Naive thymus-derived CD4-positive, alpha-beta T cell (primary cell): ENCODE measurements at regions of chrX and their contacts with region 1.

Region 1: DNA sequence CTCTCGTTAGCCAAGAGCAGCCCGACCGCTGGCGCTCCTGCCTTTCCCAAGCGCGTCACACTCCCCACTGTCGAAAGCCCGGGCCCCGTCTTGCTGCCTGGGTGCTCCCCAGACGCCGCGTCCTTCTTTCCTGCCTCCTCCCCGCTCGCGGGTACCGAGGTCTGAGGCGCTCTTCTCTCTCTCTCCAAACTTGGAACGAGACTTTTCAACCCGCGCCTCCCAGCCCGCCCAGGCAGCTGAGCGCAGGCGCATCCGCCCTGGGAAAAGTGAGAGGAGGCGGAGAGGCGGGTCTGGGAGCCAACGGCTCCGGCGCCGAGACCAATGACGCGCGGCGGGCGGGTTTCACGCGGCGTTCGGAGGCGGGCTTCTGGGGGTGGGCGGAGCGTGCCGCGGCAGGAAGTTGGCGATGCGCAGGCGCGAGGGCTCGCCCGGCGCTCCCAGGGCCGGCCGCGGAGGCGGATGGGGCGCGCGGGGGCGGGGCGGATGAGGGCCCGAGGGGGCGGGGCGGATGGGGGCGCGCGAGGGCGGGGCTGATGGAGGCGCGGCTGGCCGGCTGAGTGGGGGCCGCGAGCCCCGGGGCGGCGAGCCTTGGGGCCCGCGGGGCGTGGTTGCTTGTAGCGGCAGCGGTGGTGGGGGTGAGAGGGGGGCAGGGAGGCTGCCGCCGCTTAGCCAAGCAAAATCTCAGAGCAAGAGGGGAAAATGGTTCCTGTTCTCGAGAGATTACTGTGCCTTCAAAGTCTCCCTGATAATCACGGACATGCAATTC is at the start of gene RBBP7:
- DNase-seq: peak; percentile 88 to 98 (median 94)
- ATAC-seq: peak; percentile 91
- H3K4me3 ChIP-seq: peak within 1 kb of the TSS; percentile 69
- H3K4me3 Mint-ChIP-seq: peak within 1 kb of the TSS; percentile 93 to 99 (median 96)
- H3K27ac ChIP-seq: peak within 1 kb of the TSS; percentile 96
- H3K27ac Mint-ChIP-seq: peak within 1 kb of the TSS; percentile 89 to 98 (median 97)
- H3K4me1 ChIP-seq: peaks cover 0 to 23% of the 10 kb centered on the region in 2 donors
- H3K4me1 Mint-ChIP-seq: peaks cover 7 to 50% (median 39%) of the 10 kb centered on the region in 7 donors
- H3K27me3 ChIP-seq: no peaks in the 10 kb centered on the region
- H3K27me3 Mint-ChIP-seq: peaks cover 0 to 9% (median 0%) of the 10 kb centered on the region in 5 donors
- total RNA-seq, gene RBBP7: 82.9 to 112 (median 94.6) TPM

Region 2: DNA sequence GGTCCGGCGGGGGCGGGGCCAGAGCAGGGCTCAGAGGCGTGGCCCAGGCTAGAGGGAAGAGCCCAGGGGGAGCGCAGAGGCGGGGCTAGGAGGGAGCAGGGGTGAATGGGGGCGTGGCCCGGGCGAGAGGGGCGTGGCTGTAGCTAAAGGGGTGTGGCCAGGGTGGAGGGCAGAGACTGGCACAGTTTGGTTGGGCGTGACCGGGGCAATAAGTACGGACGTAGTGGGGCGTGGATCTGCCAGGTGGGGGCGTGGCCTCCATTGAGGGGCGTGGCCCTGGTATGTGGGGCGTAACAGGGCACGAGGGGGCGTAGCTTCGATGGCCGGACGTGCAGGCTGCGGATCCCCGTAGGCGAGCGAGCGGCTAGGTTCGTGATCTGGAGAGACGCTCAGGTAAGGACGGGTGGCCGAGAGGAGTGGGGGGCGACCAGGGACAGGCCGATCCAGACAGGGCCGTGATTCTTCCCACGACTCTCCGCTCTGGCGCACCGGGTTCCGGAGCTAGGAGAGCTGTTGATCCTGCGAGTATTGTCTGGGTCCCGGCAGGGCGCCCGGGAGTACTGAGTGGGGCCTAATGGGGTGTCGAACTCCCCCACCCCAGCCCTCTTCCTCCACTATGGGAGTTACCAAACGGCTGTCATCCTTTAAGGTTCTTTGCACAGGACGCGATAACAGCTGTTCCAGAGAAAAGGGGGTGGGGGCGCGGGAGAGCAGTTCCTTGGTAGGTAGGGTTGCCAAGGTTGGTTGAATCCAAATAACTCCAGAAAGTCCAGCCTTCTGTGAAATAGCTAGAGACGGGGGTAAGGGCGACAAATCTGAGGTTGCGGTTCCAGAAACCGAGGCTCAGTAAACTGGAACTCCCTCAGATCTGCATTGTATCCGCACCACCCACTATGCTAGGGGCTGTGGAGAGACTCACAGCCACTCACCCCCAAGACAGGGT is 1132.0 kb before region 1 on chrX and contains the start of gene CA5B:
- CTCF ChIA-PET with region 1: no interaction called
- POLR2A ChIA-PET with region 1: no interaction called
- intact Hi-C with region 1: loop called in 1 of 2 experiments (anchors 2 kb)
- DNase-seq: peak; percentile 93 to 100 (median 98)
- ATAC-seq: peak; percentile 98
- H3K4me3 ChIP-seq: peak within 1 kb of the TSS; percentile 82
- H3K4me3 Mint-ChIP-seq: peak within 1 kb of the TSS; percentile 89 to 99 (median 94)
- H3K27ac ChIP-seq: peak within 1 kb of the TSS; percentile 72
- H3K27ac Mint-ChIP-seq: peak within 1 kb of the TSS; percentile 71 to 95 (median 91)
- H3K4me1 ChIP-seq: peaks cover 16 to 19% of the 10 kb centered on the region in 2 donors
- H3K4me1 Mint-ChIP-seq: peaks cover 18 to 60% (median 43%) of the 10 kb centered on the region in 7 donors
- H3K27me3 ChIP-seq: no peaks in the 10 kb centered on the region
- H3K27me3 Mint-ChIP-seq: peaks cover 0 to 2% (median 0%) of the 10 kb centered on the region in 5 donors
- total RNA-seq, gene CA5B: 16.4 to 64.6 (median 39.5) TPM

Region 3: DNA sequence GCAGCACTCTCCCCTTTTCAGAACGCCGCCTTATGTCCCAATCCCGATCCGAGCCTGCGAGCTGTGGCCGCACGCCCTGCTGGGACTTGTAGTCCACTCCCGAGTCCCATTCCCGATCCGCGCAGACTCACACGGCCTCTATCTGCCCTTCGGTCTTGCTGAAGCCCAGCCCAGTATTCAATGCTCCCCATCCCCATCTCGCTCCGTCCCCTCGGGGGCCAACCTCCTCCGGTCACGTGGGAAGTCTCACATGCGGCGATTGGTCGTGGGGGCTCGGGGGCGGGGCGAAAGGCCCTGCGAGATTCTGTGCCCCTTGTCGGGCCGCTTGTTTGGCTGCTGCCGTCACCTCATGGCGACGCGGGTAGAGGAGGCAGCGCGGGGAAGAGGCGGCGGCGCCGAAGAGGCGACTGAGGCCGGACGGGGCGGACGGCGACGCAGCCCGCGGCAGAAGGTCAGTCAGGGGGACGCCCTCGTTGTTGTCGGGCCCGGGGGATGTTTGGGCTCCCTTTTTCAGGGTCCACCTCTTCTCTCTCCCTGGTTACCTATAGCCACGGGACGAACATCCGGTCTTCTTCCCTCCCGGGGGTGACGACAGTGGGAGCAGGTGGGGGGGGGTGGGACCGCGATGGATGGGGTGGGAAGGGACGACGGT is 84.0 kb before region 1 on chrX and contains the start of gene TXLNG:
- CTCF ChIA-PET with region 1: no interaction called
- POLR2A ChIA-PET with region 1: no interaction called
- intact Hi-C with region 1: loop called (anchors 1 kb)
- DNase-seq: peak; percentile 81 to 98 (median 97)
- ATAC-seq: peak; percentile 97
- H3K4me3 ChIP-seq: peak within 1 kb of the TSS; percentile 94
- H3K4me3 Mint-ChIP-seq: peak within 1 kb of the TSS; percentile 95 to 99 (median 97)
- H3K27ac ChIP-seq: peak within 1 kb of the TSS; percentile 88
- H3K27ac Mint-ChIP-seq: peak within 1 kb of the TSS; percentile 78 to 94 (median 90)
- H3K4me1 ChIP-seq: peaks cover 0 to 3% of the 10 kb centered on the region in 2 donors
- H3K4me1 Mint-ChIP-seq: peaks cover 4 to 42% (median 12%) of the 10 kb centered on the region in 7 donors
- H3K27me3 ChIP-seq: no peaks in the 10 kb centered on the region
- H3K27me3 Mint-ChIP-seq: no peaks in the 10 kb centered on the region
- total RNA-seq, gene TXLNG: 11.9 to 23.1 (median 17.3) TPM

Region 4: DNA sequence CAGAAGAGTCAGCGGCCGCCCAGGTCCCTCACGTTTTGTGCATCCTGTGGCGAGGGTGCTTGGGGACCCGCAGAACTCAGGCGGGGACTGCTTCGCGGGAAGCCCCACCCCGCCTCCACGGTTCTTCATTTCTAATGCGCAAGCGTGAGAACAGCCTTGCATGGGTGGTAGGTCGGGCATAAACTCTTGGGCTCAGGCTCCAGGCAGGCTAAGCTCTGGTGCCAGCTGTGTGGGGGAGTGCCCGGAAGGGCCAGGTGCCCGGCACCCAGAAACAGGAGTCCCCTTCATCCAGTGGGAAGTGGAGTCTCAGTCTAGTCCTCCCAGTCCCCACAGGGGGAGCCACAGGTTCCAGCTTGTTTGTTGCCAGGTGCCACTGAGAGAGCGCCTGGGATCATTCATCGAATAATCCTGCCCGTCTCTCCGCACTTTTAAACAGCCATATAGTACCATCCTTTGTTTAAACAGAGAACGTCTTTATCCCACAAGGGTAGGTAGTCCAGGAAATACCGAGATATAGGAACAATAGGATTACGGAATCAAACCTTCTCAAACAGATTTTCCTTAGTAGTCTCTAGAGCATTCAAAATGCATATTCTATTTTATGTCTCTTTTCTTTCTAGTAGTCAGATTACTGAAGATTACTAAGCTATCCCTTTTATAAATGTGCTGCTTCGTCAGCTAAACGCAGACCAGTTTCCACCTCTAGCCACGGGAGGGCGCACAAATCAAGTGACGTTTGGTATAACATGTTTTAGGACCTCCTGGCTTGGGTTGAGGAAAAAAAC is 12.6 kb after region 1 on chrX:
- CTCF ChIA-PET with region 1: interaction called, 16 read pairs
- POLR2A ChIA-PET with region 1: interaction called, 17 read pairs
- intact Hi-C with region 1: loop called (anchors 1 kb)
- DNase-seq: peak; percentile 32 to 64 (median 57)
- ATAC-seq: peak; percentile 86
- H3K4me3 ChIP-seq: peak overlapping the region; percentile 74
- H3K4me3 Mint-ChIP-seq: peak overlapping the region; percentile 73 to 82 (median 78)
- H3K27ac ChIP-seq: peak overlapping the region; percentile 60
- H3K27ac Mint-ChIP-seq: peak overlapping the region in 7 of 9 donors; percentile 31 to 88 (median 67)
- H3K4me1 ChIP-seq: no peaks in the 10 kb centered on the region
- H3K4me1 Mint-ChIP-seq: peaks cover 0 to 10% (median 4%) of the 10 kb centered on the region in 7 donors
- H3K27me3 ChIP-seq: no peaks in the 10 kb centered on the region
- H3K27me3 Mint-ChIP-seq: peaks cover 0 to 12% (median 0%) of the 10 kb centered on the region in 5 donors